ENCODE measurements at regions of chr12 and their contacts with region 1.

Region 1: GRCh38 chr12:124940549-124941527 is 26.4 kb upstream of the UBC start:
- DNase-seq: peak; percentile 67 to 89 (median 80)
- ATAC-seq: peak; percentile 45 to 56
- H3K4me3 Mint-ChIP-seq: no peak overlapping the region
- H3K27ac Mint-ChIP-seq: peak overlapping the region in 1 of 10 donors; percentile 33
- H3K4me1 Mint-ChIP-seq: peaks cover 0 to 10% (median 6%) of the 10 kb centered on the region in 4 donors
- H3K27me3 Mint-ChIP-seq: no peaks in the 10 kb centered on the region

Region 2: GRCh38 chr12:124906606-124907261 is 34.1 kb before region 1 on chr12:
- POLR2A ChIA-PET with region 1: interaction called, 89 read pairs
- DNase-seq: peak; percentile 61 to 97 (median 88)
- ATAC-seq: peak; percentile 74 to 89
- H3K4me3 Mint-ChIP-seq: no peak overlapping the region
- H3K27ac Mint-ChIP-seq: peak overlapping the region in 8 of 10 donors; percentile 0 to 75 (median 41)
- H3K4me1 Mint-ChIP-seq: peaks cover 16 to 30% (median 26%) of the 10 kb centered on the region in 4 donors
- H3K27me3 Mint-ChIP-seq: no peaks in the 10 kb centered on the region

Region 3: GRCh38 chr12:124927201-124928094 is 13.4 kb before region 1 on chr12:
- POLR2A ChIA-PET with region 1: interaction called, 541 read pairs
- DNase-seq: peak; percentile 75 to 97 (median 90)
- ATAC-seq: peak; percentile 79 to 87
- H3K4me3 Mint-ChIP-seq: peak overlapping the region; percentile 89 to 99 (median 95)
- H3K27ac Mint-ChIP-seq: peak overlapping the region; percentile 88 to 100 (median 95)
- H3K4me1 Mint-ChIP-seq: peaks cover 24 to 46% (median 35%) of the 10 kb centered on the region in 4 donors
- H3K27me3 Mint-ChIP-seq: peaks cover 0 to 8% (median 0%) of the 10 kb centered on the region in 5 donors

Region 4: DNA sequence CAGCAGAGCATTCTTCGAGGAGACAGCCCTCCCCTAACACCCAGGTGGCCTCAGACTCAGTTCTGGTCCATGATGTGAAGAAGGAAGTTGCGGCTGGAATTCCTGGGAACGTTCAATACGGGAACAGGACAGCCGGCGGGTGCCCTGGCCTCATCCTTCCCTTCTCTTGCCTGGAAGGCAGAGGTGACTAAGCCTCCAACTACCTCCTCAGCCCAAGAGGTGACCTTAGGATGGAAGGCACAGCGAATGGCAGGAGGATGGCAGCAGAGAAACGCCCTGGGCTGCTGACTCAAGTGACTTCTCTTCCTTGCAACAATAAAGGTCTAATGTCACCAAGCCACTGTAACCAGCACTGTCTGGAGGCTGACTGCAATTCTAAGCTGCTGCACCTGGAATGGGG is 12.0 kb after region 1 on chr12:
- POLR2A ChIA-PET with region 1: no interaction called
- DNase-seq: no peak
- ATAC-seq: no peak
- H3K4me3 Mint-ChIP-seq: no peak overlapping the region
- H3K27ac Mint-ChIP-seq: no peak overlapping the region
- H3K4me1 Mint-ChIP-seq: peaks cover 0 to 2% (median 0%) of the 10 kb centered on the region in 4 donors
- H3K27me3 Mint-ChIP-seq: no peaks in the 10 kb centered on the region

Region 5: GRCh38 chr12:125079648-125080645 is 139.1 kb after region 1 on chr12:
- POLR2A ChIA-PET with region 1: no interaction called
- DNase-seq: no peak
- ATAC-seq: no peak
- H3K4me3 Mint-ChIP-seq: no peak overlapping the region
- H3K27ac Mint-ChIP-seq: no peak overlapping the region
- H3K4me1 Mint-ChIP-seq: no peaks in the 10 kb centered on the region
- H3K27me3 Mint-ChIP-seq: no peaks in the 10 kb centered on the region

Region 6: DNA sequence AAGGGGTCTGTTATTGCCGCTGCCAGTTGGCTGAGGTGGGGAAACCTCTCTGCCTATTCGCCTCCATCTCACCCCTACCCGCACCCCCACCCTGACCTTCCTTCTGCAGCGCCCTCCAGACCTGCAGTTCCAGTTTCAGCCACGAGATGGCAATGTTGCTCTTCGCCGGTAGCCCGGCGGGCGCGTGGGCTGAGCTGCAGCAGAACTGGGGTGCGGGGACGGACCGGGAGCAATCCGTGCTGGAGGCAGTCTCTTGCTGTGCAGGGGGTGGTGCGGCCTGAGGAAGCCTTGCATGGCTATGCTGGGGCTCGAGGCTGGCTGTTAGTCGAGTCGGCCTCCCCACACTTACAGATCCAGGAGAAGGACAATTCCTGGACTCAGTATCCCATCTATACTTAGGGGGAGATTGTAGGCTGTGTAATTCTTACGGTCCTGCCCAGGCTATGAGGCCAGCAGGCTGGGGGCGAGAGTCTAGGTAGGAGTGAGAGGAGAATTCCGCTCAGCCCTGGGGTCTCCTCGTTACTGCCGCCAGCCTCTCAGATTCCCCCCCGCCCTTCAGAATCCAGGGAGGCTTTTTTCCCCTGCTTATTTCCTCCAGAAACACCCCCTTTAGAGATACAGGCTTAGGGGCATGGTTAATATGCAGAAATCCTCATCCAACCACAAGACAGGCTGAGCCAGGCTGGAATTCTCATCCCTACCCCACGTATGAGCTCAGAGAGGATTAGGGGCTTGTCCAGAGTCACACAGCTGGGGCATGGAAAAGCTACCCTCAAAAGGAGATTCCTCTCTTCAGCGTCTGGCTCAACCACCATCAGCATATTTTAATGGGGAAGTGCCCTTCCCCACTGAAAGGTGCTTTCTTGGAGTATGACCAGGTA is 242.6 kb after region 1 on chr12:
- POLR2A ChIA-PET with region 1: no interaction called
- DNase-seq: peak; percentile 52 to 83 (median 71)
- ATAC-seq: peak; percentile 80 to 81
- H3K4me3 Mint-ChIP-seq: peak overlapping the region in 2 of 10 donors; percentile 3 to 18
- H3K27ac Mint-ChIP-seq: no peak overlapping the region
- H3K4me1 Mint-ChIP-seq: peaks cover 2 to 17% (median 9%) of the 10 kb centered on the region in 4 donors
- H3K27me3 Mint-ChIP-seq: peaks cover 38 to 68% (median 50%) of the 10 kb centered on the region in 5 donors

Measured in naive thymus-derived CD8-positive, alpha-beta T cell (primary cell).